Head of caudate nucleus (tissue), 42 donors: ENCODE measurements at regions of chr12 and their contacts with region 1.

Region 1: DNA sequence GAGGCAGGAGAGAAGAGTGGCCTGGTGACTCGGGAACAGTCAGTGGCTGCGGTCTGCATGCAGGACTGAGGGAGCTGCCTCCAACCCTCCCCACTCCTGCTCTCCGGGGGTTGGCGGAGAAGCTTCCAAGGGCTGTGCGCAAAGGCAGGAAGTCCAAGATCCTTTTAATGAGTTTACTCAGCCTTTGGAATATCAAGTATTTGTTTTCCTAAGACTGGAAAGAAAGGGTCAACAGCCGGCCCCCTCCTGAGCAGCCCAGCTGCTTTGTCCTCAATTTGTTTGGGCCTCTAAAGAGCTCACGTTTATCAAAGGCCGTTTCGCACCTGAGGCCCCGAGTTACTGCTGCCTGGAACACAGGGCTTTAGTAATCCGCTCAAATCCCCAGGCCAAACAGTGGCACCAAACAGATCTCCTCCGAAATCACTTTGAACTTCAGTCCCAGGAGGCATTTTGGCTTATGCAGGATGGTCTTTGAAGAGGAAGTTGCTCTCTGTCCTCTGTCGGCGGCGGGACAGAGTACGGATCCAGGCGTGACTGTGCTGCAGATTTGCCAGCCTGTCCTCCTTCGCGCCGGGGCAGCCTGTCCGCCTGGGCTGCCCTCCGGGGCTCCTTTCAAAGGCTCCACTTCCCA is 117.2 kb upstream of the FZD10 start:
- DNase-seq: peak in 1 of 42 donors; percentile 16

Region 2: DNA sequence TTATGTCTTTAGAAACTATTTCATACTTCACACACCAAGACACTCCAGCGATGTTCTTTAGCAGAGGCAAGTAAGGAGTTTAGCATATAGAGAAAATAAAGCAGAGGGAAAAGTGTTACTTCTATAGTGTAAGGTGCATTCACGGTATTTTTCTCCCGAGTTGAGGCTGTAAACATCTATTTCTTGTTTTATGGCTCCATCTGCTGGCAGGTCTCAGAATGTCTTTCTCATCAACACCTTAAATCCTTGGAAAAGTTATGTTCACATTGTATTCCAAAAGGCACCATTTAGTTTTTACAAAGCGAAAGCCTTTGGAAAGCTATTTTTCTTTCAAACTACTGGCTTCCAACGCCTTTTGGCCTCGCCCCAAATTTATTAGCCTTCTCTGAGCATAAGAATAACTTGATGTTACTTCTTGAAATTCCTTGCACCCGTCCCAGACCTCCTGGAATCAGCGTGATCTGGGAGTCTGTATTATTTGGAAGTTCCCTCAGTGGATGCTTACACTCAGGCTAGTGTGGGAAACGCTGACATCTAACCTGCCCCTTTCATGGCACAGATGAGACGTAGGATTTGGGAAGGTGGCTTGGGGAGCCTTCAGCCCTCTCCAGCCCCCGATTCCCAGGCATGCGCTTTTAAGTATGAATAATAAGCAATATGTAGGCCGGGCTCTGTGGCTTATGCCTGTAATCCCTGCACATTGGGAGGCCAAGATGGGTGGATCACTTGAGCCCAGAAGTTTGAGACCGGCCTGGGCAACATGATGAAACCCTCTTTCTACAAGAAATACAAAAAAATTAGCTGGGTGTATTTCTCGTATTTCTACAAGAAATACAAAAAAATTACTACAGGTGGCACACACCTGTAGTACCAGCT is 290.6 kb after region 1 on chr12:
- intact Hi-C with region 1: loop called (anchors 2 kb)
- DNase-seq: peak in 25 of 42 donors; percentile 25 to 86 (median 66)

Region 3: DNA sequence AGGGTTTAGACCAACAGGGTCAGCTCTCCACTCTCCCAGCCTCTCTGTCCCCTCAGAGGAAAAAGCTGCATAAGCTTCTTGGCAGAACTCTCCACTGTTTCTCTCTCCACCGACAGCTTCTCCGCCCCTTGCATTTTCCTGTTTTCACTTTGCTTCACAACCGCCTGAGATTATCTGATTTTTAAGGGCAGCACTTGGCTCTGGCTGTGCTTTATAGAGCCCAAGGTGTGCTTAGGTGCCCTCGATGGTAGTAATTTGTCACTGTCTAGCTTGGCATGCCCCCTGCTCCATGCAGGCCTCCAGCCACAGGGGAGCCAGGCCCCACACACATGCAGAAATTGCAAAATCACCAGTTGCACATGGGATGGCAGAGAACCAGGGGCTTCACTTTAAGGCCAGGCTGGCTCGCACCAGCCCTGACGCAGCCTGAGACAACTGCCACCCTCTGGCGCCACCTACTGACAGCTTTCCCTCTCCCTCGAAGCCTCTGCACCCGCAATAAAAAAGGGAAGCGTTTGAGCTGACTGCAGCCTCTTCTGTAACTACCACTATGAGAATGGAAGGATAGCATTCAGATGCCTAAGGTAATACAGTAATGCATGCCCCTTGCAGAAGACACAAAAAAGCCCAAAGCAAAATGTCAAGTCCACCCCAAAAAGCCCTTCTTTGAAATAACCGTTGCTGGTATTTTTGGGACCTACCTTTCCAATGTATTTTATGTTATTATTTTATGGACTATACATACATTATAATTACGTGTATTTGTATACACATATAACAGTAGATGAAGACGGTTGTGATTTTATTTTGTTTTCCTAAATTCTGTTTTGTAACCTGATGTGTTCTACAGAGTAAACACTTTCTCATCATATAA is 703.0 kb after region 1 on chr12:
- intact Hi-C with region 1: loop called (anchors 5 kb)
- DNase-seq: peak; percentile 71 to 92 (median 84)